ENCODE measurements at regions of chr7 and their contacts with region 1.

Region 1: DNA sequence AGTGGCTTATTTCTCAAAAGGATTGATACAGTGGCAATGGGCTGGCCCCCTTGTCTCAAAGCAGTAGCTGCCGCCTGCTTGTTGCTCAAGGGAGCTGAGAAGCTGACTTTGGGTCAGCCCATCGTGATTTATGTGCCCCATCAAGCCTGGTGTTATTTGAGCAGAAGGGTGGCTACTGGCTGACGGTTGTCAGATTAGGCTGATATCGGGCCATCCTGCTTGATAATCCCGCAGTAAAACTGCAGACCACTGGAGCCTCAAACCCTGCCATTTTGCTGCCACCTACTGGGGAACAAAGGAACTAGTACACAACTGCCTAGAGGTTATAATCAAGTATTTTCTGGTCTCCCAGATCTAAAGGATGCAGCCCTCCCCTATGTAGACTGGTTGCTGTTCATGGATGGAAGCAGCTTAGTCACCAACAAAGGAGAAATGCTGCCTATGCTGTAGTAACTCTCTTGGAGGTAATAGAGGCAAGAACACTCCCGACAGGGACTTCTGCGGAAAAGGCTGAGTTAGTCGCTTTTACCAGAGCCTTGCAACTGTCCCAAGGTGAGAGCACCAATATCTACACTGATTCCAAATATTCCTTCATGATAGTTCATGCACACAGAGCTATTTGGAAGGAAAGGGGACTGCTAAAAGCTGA is 65.9 kb upstream of the ZNF92 start:
- DNase-seq: peak in 8 of 10 donors; percentile 25 to 65 (median 46)
- H3K4me3 ChIP-seq: no peak overlapping the region
- H3K27ac ChIP-seq: no peak overlapping the region
- H3K27me3 ChIP-seq: peaks cover 0 to 23% (median 0%) of the 10 kb centered on the region in 45 donors
- CTCF ChIP-seq: peak; percentile 30 to 92 (median 80)

Region 2: DNA sequence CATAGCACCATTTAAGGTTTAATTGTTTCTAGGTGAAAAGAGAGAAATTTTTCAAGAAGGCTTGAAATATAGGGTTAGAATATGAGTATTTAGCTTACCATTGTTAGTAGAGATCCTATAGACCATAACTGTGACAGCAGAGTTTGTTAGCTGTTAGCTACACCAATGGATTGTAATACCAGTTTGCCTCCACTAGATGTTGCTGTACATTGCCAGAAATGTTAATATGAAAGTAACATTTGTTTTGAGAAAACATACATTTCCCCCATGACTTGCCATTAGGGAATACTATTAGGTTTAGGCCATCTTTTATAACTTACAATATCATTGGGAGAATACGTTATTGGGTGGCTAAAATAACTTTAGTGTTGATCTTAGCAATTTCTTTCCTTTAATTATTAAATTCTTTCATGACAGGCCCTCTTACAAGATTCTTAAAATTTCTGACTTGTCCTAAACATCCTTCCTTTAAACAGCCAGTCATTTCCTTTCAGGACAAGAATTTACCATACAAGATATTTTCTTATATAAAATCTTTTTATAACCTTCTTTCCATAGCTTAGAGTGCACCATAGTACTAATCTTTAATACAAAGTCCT is 356.4 kb before region 1 on chr7:
- intact Hi-C with region 1: loop called (anchors 2 to 5 kb)
- DNase-seq: no peak
- H3K4me3 ChIP-seq: no peak overlapping the region
- H3K27ac ChIP-seq: peak overlapping the region in 1 of 59 donors; percentile 7
- H3K27me3 ChIP-seq: peaks cover 0 to 17% (median 9%) of the 10 kb centered on the region in 45 donors
- CTCF ChIP-seq: peak; percentile 59 to 95 (median 87)